ENCODE measurements at regions of chr15 and their contacts with region 1.

Region 1: GRCh38 chr15:96088650-96089049 is 241.8 kb upstream of the NR2F2 start:
- DNase-seq: no peak
- H3K4me3 ChIP-seq: no peak overlapping the region
- H3K27ac ChIP-seq: no peak overlapping the region
- H3K4me1 ChIP-seq: peaks cover 0 to 6% (median 0%) of the 10 kb centered on the region in 4 donors
- H3K27me3 ChIP-seq: no peaks in the 10 kb centered on the region
- CTCF ChIP-seq: no peak
- EP300 ChIP-seq: no peak
- POLR2A ChIP-seq: no peak

Region 2: DNA sequence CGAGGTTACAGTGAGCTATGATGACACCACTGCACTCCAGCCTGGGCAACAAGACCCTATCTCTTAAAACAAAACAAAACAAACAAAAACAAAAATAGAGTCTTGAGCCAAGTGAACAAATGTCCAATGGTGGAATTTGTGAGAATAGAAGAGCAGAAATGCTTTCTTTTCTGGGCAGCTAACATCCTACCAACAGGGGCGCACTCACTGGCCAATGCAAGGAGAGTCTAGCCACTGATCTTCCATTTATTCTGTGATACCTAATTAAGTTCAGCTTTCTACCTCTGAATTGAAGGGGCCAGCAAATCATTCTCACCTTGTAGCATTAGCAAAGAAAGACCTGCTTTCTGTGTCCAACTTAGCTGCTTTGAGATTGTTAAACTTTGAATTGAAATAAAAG is 60.0 kb before region 1 on chr15:
- in situ Hi-C with region 1: no loop called
- intact Hi-C with region 1: no loop called
- DNase-seq: no peak
- H3K4me3 ChIP-seq: no peak overlapping the region
- H3K27ac ChIP-seq: no peak overlapping the region
- H3K4me1 ChIP-seq: no peaks in the 10 kb centered on the region
- H3K27me3 ChIP-seq: no peaks in the 10 kb centered on the region
- CTCF ChIP-seq: no peak
- EP300 ChIP-seq: no peak
- POLR2A ChIP-seq: no peak

Region 3: DNA sequence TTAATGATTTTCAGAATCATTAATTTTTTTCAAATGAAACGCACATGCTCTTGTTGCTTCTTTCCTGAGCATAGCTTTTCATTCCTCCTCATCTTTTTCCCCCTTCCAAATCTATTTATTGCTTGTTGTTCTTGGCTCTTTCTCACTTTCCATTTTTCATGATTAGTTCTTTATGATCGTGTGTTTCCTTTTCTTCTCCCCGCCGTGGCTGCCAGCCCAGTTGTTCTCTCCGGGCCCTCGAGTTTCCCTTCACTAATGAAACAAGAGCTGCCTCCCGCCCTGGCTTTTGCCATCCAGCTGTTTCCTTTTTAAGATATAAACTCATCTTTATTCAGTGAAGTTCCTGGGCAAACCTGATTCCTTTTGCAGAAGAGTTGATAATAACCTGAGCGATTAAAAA is 71.6 kb after region 1 on chr15:
- in situ Hi-C with region 1: no loop called
- intact Hi-C with region 1: loop called (anchors 2 kb)
- DNase-seq: no peak
- H3K4me3 ChIP-seq: no peak overlapping the region
- H3K27ac ChIP-seq: peak overlapping the region in 1 of 4 donors; percentile 23
- H3K4me1 ChIP-seq: no peaks in the 10 kb centered on the region
- H3K27me3 ChIP-seq: no peaks in the 10 kb centered on the region
- CTCF ChIP-seq: no peak
- EP300 ChIP-seq: no peak
- POLR2A ChIP-seq: no peak

Measured in transverse colon (tissue), 4 donors.